Breast epithelium (tissue), 4 donors: ENCODE measurements at regions of chr6 and their contacts with region 1.

Region 1: GRCh38 chr6:108531336-108531735 is 29.4 kb upstream of the FOXO3 start:
- DNase-seq: no peak
- H3K4me3 ChIP-seq: no peak overlapping the region
- H3K27ac ChIP-seq: no peak overlapping the region
- H3K4me1 ChIP-seq: no peaks in the 10 kb centered on the region
- H3K27me3 ChIP-seq: no peaks in the 10 kb centered on the region
- CTCF ChIP-seq: no peak
- POLR2A ChIP-seq: no peak

Region 2: GRCh38 chr6:108113557-108114519 is 417.5 kb before region 1 on chr6:
- intact Hi-C with region 1: loop called (anchors 10 kb)
- DNase-seq: no peak
- H3K4me3 ChIP-seq: peak overlapping the region in 2 of 3 donors; percentile 19 to 53
- H3K27ac ChIP-seq: no peak overlapping the region
- H3K4me1 ChIP-seq: no peaks in the 10 kb centered on the region
- H3K27me3 ChIP-seq: peaks cover 0 to 32% of the 10 kb centered on the region in 2 donors
- CTCF ChIP-seq: peak; percentile 49 to 63 (median 58)
- POLR2A ChIP-seq: no peak

Region 3: GRCh38 chr6:108337721-108338120 is 193.6 kb before region 1 on chr6:
- intact Hi-C with region 1: no loop called
- DNase-seq: no peak
- H3K4me3 ChIP-seq: no peak overlapping the region
- H3K27ac ChIP-seq: no peak overlapping the region
- H3K4me1 ChIP-seq: no peaks in the 10 kb centered on the region
- H3K27me3 ChIP-seq: no peaks in the 10 kb centered on the region
- CTCF ChIP-seq: no peak
- POLR2A ChIP-seq: no peak